ENCODE measurements at regions of chr5 and their contacts with region 1.

Region 1: GRCh38 chr5:175534070-175534932 is 55.9 kb downstream of the SFXN1 start:
- DNase-seq: peak; percentile 47 to 52
- ATAC-seq: peak; percentile 47 to 81
- H3K4me3 ChIP-seq: no peak overlapping the region
- H3K27ac ChIP-seq: no peak overlapping the region
- H3K4me1 ChIP-seq: no peaks in the 10 kb centered on the region
- H3K27me3 ChIP-seq: no peaks in the 10 kb centered on the region
- CTCF ChIP-seq: peak; percentile 83 to 95 (median 87)
- POLR2A ChIP-seq: no peak

Region 2: GRCh38 chr5:175712681-175713085 is 178.4 kb after region 1 on chr5:
- in situ Hi-C with region 1: loop called (anchors 5 to 10 kb)
- intact Hi-C with region 1: no loop called
- DNase-seq: no peak
- ATAC-seq: no peak
- H3K4me3 ChIP-seq: no peak overlapping the region
- H3K27ac ChIP-seq: no peak overlapping the region
- H3K4me1 ChIP-seq: no peaks in the 10 kb centered on the region
- H3K27me3 ChIP-seq: no peaks in the 10 kb centered on the region
- CTCF ChIP-seq: no peak
- POLR2A ChIP-seq: no peak

Region 3: GRCh38 chr5:175718401-175719108 is 184.3 kb after region 1 on chr5:
- in situ Hi-C with region 1: loop called (anchors 5 to 10 kb)
- intact Hi-C with region 1: loop called (anchors 2 kb)
- DNase-seq: no peak
- ATAC-seq: no peak
- H3K4me3 ChIP-seq: no peak overlapping the region
- H3K27ac ChIP-seq: no peak overlapping the region
- H3K4me1 ChIP-seq: no peaks in the 10 kb centered on the region
- H3K27me3 ChIP-seq: no peaks in the 10 kb centered on the region
- CTCF ChIP-seq: peak; percentile 30 to 66 (median 64)
- POLR2A ChIP-seq: no peak